ENCODE measurements at regions of chr3 and their contacts with region 1.

Region 1: DNA sequence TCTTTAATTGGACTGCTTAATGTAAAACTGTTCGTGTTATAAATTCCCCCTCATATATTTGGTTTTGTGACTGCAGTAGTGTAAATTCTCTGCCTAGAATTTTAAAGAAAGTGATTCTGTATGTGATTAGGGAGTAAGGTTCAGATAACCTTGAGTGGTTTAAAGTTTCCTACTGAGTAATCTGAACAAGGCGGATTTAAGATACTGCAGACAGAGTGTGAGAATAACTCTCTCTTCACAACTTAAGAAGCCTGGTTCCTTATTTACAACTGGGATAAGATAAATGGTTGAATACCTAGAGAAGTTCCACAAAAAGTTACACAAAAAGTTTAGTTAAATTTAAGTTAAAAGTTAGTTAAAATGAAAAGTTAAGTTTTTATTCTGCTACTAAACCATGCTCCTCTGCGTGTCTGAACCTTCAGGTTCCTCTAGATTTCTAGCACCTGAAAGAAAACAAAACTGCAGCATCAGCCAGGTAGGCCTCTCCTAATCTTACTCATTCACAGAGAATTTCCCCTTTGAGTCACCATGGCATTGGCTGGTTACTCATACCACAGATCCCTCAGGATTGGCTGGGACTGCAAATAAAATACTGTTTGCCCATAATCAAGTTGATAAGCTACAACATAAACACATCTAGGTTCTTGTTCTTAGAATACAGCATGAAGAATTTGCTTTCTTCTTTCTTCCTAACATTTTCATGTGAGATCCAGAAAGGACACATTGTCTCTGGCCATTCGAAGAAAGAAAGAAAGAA is at the start of gene ARL14:
- DNase-seq: peak; percentile 75 to 97
- H3K4me3 ChIP-seq: peak within 1 kb of the TSS; percentile 48
- H3K27ac ChIP-seq: peak within 1 kb of the TSS; percentile 91
- H3K4me1 ChIP-seq: peaks cover 57% of the 10 kb centered on the region
- H3K27me3 ChIP-seq: no peaks in the 10 kb centered on the region
- CTCF ChIP-seq: no peak
- total RNA-seq, gene ARL14: 13.0 and 17.6 TPM in 2 replicates

Region 2: DNA sequence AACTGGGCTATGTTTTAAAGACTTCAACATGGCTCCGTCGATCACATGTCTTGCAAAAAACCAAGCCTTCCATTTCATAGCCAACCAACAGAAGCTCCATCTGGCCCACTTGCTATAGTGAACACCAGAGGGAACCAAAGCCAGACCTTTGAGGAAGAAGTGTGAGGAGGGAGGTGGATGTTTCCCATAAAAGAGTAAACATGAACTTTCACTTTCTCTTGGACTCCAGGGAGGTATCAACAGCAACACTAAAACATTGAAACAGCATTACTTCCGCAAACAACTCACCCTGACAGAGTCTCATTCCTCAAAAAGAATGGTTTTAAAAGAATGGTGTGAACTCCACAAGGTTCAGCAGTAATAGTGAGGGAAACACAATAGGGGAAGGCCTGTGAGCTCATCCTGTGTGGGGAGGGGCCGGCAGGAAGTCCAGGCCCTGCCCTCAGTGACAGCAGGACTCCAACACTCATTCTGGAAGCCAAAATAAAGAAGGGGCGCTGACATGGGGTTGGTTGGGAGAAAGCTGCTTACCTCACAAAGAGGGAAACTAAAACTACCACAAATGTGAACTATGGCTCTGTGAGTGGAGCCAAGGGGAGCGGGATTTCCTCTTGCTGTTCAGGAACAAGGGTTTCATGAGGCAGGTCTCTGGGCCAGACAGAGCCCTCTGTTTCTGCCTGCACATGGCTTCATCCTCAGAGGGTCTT is 747.1 kb before region 1 on chr3:
- CTCF ChIA-PET with region 1: no interaction called
- POLR2A ChIA-PET with region 1: interaction called, 10 read pairs
- intact Hi-C with region 1: no loop called
- DNase-seq: peak; percentile 51 to 93
- H3K4me3 ChIP-seq: peak overlapping the region; percentile 27; the same call in 1 of the 2 replicates
- H3K27ac ChIP-seq: peak overlapping the region; percentile 94
- H3K4me1 ChIP-seq: peaks cover 46% of the 10 kb centered on the region
- H3K27me3 ChIP-seq: no peaks in the 10 kb centered on the region
- CTCF ChIP-seq: peak; percentile 62

Region 3: DNA sequence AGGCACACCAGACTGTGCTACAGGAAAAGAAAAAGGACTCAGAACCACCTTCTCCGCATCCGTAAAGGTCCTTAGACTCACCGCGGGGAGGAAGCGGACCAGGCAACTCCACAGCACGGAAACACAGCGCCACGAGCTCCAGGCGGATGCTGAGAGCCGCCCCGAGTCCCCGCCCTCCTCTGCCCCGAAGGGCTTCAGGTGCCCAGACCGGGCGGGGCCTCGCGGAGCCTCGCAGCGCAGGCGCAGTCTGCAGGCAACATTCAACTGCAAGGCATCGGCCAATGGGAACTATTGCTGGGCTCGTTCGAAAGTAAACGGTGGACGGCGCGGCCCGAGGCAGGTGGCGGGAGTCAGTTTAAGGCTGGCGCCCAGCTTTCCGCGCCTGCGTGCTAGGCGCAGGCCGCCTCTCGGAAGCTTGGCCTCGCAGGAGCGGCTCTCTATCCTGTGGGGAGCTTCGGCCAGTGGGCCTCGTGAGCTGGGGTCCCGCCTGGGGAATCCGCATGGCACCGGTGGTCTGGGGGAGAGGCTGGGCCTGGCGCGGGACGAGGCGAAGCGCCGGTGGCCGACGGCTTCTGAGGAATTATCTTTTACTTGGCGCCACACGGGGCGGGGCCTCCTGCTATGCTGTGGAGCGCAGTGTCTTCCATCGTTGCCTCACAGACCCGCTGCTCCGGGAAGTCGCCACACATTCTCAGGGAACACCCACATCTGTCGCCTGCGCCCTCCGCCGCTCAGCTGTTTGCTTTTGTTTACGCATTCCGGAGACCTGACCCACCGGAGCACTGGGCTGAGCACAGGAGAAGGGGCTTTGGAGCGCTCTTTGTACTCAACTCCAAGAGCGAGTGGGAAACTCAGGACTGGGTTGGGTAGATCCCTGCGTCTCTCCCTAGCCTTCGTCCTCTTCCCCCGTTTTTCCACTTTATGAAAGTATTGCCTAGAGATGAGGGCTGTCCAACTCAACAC is 226.8 kb before region 1 on chr3 and contains the start of gene TRIM59:
- CTCF ChIA-PET with region 1: no interaction called
- POLR2A ChIA-PET with region 1: interaction called, 5 read pairs
- intact Hi-C with region 1: loop called (anchors 5 kb)
- DNase-seq: peak; percentile 88 to 95
- H3K4me3 ChIP-seq: peak within 1 kb of the TSS; percentile 76
- H3K27ac ChIP-seq: peak within 1 kb of the TSS; percentile 51
- H3K4me1 ChIP-seq: peaks cover 21% of the 10 kb centered on the region
- H3K27me3 ChIP-seq: no peaks in the 10 kb centered on the region
- CTCF ChIP-seq: peak; percentile 10; the same call in 1 of the 2 replicates
- total RNA-seq, gene TRIM59: 14.4 and 23.3 TPM in 2 replicates

Region 4: GRCh38 chr3:160565442-160566403 is 111.0 kb before region 1 on chr3 and contains the start of gene KPNA4:
- CTCF ChIA-PET with region 1: interaction called, 3 read pairs
- POLR2A ChIA-PET with region 1: interaction called, 5 read pairs
- intact Hi-C with region 1: loop called (anchors 1 kb)
- DNase-seq: peak; percentile 94 to 99
- H3K4me3 ChIP-seq: peak within 1 kb of the TSS; percentile 86
- H3K27ac ChIP-seq: peak within 1 kb of the TSS; percentile 98
- H3K4me1 ChIP-seq: peaks cover 40% of the 10 kb centered on the region
- H3K27me3 ChIP-seq: no peaks in the 10 kb centered on the region
- CTCF ChIP-seq: no peak
- total RNA-seq, gene KPNA4: 49.2 and 61.0 TPM in 2 replicates

Region 5: GRCh38 chr3:161220850-161221753 is 544.4 kb after region 1 on chr3 and contains the start of gene NMD3:
- CTCF ChIA-PET with region 1: no interaction called
- POLR2A ChIA-PET with region 1: interaction called, 7 read pairs
- intact Hi-C with region 1: loop called (anchors 5 kb)
- DNase-seq: peak; percentile 84 to 95
- H3K4me3 ChIP-seq: peak within 1 kb of the TSS; percentile 87
- H3K27ac ChIP-seq: peak within 1 kb of the TSS; percentile 65
- H3K4me1 ChIP-seq: peaks cover 27% of the 10 kb centered on the region
- H3K27me3 ChIP-seq: no peaks in the 10 kb centered on the region
- CTCF ChIP-seq: no peak
- total RNA-seq, gene NMD3: 56.5 and 64.2 TPM in 2 replicates